ENCODE measurements at regions of chr1 and their contacts with region 1.

Region 1: DNA sequence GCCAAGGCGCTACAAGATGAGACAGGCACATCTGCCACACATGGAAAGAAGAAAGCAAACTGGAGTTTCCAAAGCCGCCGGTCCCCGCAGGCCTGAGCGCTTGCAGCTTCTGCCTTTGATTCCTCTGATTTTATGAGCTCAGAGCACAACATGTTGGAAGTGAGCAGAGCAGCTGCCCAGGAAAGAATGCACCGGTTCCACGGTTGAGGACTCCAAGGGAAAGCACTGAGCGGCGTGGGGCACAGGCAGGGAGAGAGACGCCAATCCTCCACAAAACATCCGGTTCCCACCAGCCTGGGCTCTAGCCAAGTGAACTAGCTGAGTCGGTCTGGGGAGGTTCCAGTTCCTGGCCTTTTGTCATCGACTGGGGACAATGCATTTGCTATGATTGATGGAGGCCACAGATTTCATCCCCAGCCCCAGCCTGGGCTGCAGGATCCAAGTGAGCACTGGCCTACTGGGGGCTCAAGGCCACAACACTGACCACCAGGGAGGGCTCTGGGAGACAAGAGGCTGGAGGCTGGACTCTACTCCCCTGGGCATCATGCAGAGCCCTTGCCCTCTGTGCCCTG is 253.1 kb upstream of the IRF2BP2 start:
- DNase-seq: no peak
- ATAC-seq: no peak
- H3K4me3 ChIP-seq: no peak overlapping the region
- H3K27ac ChIP-seq: no peak overlapping the region
- H3K4me1 ChIP-seq: peaks cover 26 to 42% of the 10 kb centered on the region in 2 experiments; a peak in 4 of 5 replicates
- H3K27me3 ChIP-seq: no peaks in the 10 kb centered on the region
- CTCF ChIP-seq: no peak
- EP300 ChIP-seq: no peak
- POLR2A ChIP-seq: no peak
- RAD21 ChIP-seq: 0 out of 4 replicates have a peak, but pooled peaks of 1 of the 2 experiments have one; percentile 9

Region 2: DNA sequence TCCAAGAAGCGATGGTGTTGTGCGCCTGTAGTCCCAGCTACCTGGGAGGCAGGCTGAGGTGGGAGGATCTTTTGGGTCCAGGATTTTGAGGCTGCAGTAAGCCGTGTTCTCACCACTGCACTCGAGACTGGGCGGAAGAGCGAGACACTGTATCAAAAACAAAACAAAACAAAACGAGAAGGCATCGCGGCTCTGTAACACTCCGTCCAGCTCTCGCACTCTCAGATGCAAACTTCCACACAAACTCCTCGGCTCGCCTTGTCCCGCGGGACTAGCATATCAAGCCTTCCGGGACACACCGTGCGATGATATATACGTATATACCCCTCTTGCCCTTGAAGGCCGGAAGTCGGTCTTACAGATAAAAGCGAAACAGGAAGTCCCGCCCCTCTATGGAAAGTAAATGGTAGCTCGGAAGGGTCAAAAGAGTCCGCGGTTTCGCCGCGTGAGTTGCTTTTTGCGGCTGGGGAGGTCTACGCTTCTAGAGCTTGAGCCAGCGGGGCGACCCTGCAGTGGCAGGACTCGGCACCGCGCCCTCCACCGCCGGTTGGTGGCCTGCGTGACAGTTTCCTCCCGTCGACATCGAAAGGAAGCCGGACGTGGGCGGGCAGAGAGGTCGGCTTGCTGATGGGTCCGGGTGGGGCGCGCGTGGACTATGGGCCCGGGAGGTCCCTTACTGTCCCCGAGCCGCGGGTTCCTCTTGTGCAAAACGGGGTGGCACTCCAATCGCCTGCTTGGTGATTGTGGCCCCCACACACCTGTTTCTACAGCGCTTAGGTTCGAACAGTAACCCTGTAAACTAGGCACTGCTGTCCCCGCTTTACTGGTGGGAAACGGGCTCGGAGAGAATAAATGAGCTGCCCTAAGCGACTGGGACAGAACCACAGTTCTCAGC is 489.7 kb before region 1 on chr1 and contains the start of gene COA6:
- CTCF ChIA-PET with region 1: no interaction called
- POLR2A ChIA-PET with region 1: no interaction called
- in situ Hi-C with region 1: no loop called
- intact Hi-C with region 1: loop called (anchors 10 kb)
- DNase-seq: peak; percentile 90 to 99 (median 92)
- ATAC-seq: peak; percentile 90
- H3K4me3 ChIP-seq: peak within 1 kb of the TSS; percentile 81
- H3K27ac ChIP-seq: peak within 1 kb of the TSS; percentile 93
- H3K4me1 ChIP-seq: peaks cover 5 to 36% of the 10 kb centered on the region in 2 experiments
- H3K27me3 ChIP-seq: no peaks in the 10 kb centered on the region
- CTCF ChIP-seq: no peak; a peak in 1 of 6 replicates
- EP300 ChIP-seq: peak; percentile 63
- POLR2A ChIP-seq: peak; percentile 100
- RAD21 ChIP-seq: peak in 1 of 2 experiments; percentile 20; a peak in 2 of 4 replicates
- polyA plus RNA-seq, gene COA6: 171 to 187 TPM

Region 3: GRCh38 chr1:234730770-234731568 is 132.1 kb before region 1 on chr1:
- CTCF ChIA-PET with region 1: no interaction called
- POLR2A ChIA-PET with region 1: interaction called, 12 read pairs
- in situ Hi-C with region 1: loop called (anchors 5 kb)
- intact Hi-C with region 1: no loop called
- DNase-seq: peak; percentile 59 to 84 (median 70)
- ATAC-seq: peak; percentile 83
- H3K4me3 ChIP-seq: no peak overlapping the region
- H3K27ac ChIP-seq: no peak overlapping the region
- H3K4me1 ChIP-seq: peaks cover 43 to 57% of the 10 kb centered on the region in 2 experiments
- H3K27me3 ChIP-seq: no peaks in the 10 kb centered on the region
- CTCF ChIP-seq: peak in 2 of 3 experiments; percentile 61 to 62; a peak in 5 of 6 replicates
- EP300 ChIP-seq: peak; percentile 89
- POLR2A ChIP-seq: no peak
- RAD21 ChIP-seq: peak; percentile 64 to 73

Region 4: GRCh38 chr1:234755449-234755863 is 107.6 kb before region 1 on chr1:
- CTCF ChIA-PET with region 1: no interaction called
- POLR2A ChIA-PET with region 1: no interaction called
- in situ Hi-C with region 1: no loop called
- intact Hi-C with region 1: loop called (anchors 5 kb)
- DNase-seq: peak in 2 of 4 experiments; percentile 27 to 66
- ATAC-seq: peak; percentile 69
- H3K4me3 ChIP-seq: no peak overlapping the region
- H3K27ac ChIP-seq: no peak overlapping the region
- H3K4me1 ChIP-seq: peaks cover 14 to 36% of the 10 kb centered on the region in 2 experiments; a peak in 4 of 5 replicates
- H3K27me3 ChIP-seq: no peaks in the 10 kb centered on the region
- CTCF ChIP-seq: no peak
- EP300 ChIP-seq: no peak
- POLR2A ChIP-seq: no peak
- RAD21 ChIP-seq: peak in 1 of 2 experiments; percentile 16; a peak in 1 of 4 replicates

Region 5: DNA sequence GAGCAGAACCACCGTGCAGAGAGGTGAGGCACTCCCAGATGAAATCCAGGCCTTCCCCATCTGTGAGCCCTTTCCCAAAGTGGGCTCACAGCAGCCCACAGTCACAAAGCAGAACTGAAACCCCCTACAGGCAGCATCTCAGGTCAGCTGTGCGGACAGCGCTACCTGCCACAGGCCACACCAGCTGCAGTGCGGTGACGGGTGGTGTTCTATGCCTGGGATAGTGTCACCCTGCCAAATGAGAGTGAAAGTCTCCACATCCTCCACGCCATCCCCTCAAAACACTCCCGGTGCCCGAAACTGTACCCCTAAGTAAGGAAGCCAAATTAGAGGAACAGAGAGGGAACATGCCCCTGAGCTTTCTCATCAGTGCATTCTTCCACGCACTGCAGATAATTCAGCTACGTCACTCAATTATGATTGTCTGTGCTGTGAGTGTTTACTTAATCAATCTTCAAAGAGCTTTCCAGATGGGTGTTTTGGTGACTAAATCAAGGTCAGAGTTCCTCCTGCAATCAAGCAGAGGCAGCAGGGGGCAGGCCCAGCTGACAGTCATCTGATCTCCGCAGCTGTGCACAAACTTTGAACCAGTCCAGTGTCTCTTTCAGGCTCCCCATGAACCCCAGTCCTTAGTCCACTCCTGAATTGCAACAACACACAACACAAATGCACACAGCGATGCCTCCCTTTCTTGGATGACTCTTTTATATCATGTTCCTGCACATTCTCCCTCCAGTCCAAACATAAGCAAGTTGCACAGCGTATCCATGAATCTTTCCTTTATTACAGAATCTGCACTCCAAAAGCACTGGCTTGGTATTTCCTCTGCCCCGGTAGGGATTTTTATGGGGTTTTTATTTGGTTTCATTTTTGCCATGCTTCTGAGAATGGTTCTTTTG is 115.6 kb after region 1 on chr1:
- CTCF ChIA-PET with region 1: no interaction called
- POLR2A ChIA-PET with region 1: no interaction called
- in situ Hi-C with region 1: no loop called
- intact Hi-C with region 1: loop called (anchors 2 kb)
- DNase-seq: peak; percentile 60 to 84 (median 78)
- ATAC-seq: peak; percentile 16
- H3K4me3 ChIP-seq: no peak overlapping the region
- H3K27ac ChIP-seq: peak overlapping the region; percentile 2; the same call in 1 of the 3 replicates
- H3K4me1 ChIP-seq: peaks cover 49 to 85% of the 10 kb centered on the region in 2 experiments
- H3K27me3 ChIP-seq: no peaks in the 10 kb centered on the region
- CTCF ChIP-seq: peak in 2 of 3 experiments; percentile 10 to 41; a peak in 3 of 6 replicates
- EP300 ChIP-seq: peak; percentile 81
- POLR2A ChIP-seq: no peak
- RAD21 ChIP-seq: peak; percentile 39 to 57